ENCODE measurements at regions of chr9 and their contacts with region 1.

Region 1: DNA sequence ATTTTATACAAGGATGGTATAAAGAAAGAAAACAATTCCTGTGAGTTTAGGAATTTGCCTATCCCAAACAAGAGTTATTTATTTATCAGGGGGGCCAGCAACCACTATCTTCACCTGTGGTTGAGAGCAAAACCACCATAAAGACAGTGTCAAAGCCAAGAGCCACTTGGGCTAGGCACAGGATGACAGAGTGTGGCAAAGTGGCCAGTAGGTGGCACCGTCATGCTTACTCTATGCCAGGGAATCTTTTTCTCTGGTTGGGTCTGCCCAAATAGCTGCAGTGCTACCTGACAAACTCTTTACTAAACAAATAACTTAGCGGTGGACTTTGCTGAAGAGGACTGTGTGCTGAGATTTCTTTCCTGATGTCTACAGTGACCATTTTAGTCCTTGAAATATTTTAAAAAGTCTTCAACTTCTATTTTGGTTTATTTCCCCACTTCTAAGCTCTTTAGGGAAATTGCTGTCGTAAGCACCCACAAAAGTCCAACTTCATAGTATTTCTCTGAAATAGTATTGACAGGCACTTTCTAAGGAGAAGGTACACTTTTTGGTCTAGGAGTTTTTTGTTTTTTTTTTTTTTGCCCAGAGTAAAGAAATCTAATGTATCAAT is 285.0 kb downstream of the RFX3 start:
- DNase-seq: peak; percentile 65
- ATAC-seq: peak; percentile 99
- H3K4me3 ChIP-seq: no peak overlapping the region
- H3K27ac ChIP-seq: no peak overlapping the region
- H3K4me1 ChIP-seq: no peaks in the 10 kb centered on the region
- H3K27me3 ChIP-seq: no peaks in the 10 kb centered on the region
- CTCF ChIP-seq: peak; percentile 43 to 86 (median 81); a peak in 5 of 6 replicates
- POLR2A ChIP-seq: no peak
- RAD21 ChIP-seq: peak; percentile 64

Region 2: DNA sequence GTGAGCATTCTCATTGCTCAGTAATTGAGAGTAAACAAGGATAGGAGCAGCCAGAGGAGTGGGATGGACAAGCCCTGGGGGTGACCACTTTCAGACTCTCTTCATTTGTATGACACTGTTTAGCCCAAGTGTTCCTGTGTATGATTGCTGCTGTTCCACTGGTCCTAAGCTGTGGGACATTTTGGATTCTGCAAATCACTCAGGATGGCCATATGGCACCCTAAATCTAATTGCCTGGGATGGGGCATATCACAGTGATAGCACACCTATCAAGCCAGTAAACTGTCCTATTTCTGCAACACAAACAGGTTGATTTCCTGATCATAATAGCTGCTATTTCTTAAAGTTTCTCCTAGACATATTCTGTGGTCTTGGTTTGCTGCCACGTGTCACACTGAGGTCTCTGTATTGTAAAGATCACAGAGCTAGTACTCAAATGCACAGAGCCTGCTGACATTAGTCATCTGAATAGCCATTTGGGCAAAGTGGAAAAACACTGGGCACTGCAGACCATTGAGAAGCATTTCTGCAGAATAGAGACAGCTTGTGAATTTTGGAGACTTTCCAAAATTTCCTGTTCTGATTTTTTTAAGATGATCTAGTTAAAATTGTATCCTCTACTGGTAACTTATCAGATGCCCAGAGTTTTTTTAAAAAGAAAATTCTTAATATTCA is 35.2 kb before region 1 on chr9:
- CTCF ChIA-PET with region 1: no interaction called
- POLR2A ChIA-PET with region 1: no interaction called
- RAD21 ChIA-PET with region 1: no interaction called
- intact Hi-C with region 1: no loop called
- DNase-seq: no peak
- ATAC-seq: no peak
- H3K4me3 ChIP-seq: no peak overlapping the region
- H3K27ac ChIP-seq: no peak overlapping the region
- H3K4me1 ChIP-seq: no peaks in the 10 kb centered on the region
- H3K27me3 ChIP-seq: peaks cover 8% of the 10 kb centered on the region; the same call in 1 of the 2 replicates
- CTCF ChIP-seq: no peak
- POLR2A ChIP-seq: no peak
- RAD21 ChIP-seq: no peak

Region 3: GRCh38 chr9:3342159-3342777 is 101.5 kb after region 1 on chr9:
- CTCF ChIA-PET with region 1: no interaction called
- POLR2A ChIA-PET with region 1: no interaction called
- RAD21 ChIA-PET with region 1: no interaction called
- intact Hi-C with region 1: no loop called
- DNase-seq: no peak
- ATAC-seq: no peak
- H3K4me3 ChIP-seq: no peak overlapping the region
- H3K27ac ChIP-seq: no peak overlapping the region
- H3K4me1 ChIP-seq: peaks cover 0 to 6% of the 10 kb centered on the region in 2 experiments; a peak in 2 of 4 replicates
- H3K27me3 ChIP-seq: no peaks in the 10 kb centered on the region
- CTCF ChIP-seq: no peak
- POLR2A ChIP-seq: no peak
- RAD21 ChIP-seq: no peak

Region 4: DNA sequence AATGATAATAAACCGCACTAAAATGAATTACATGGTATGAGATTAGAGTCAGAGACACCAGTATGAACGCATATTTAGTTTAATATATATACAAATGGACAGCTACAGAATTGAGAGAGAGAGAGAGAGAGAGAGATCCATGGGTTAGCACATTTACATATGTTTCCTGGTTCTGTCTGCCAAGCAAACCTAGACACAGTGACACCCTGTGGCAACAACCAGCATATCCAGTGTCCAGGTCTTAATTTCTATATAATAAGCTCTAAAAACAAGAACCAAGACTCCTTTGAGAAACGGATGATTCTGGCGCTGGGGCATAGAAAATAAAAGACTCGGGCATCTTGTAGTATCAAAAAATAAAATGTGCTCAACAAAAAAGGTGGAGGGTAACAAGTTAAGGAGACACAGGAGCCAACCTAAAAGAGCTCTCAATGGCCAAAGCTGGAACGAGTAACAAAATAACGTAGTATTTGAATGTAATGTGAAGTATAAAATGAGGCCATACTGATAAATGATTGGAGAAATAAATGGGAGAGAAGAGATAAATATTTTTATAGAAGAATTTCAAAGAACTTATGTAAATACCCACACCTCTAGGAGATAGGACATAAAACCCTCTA is 200.5 kb after region 1 on chr9:
- CTCF ChIA-PET with region 1: interaction called, 38 read pairs
- POLR2A ChIA-PET with region 1: no interaction called
- RAD21 ChIA-PET with region 1: interaction called in 1 of 2 experiments, 6 read pairs
- intact Hi-C with region 1: loop called (anchors 2 kb)
- DNase-seq: peak; percentile 51
- ATAC-seq: peak; percentile 87
- H3K4me3 ChIP-seq: no peak overlapping the region
- H3K27ac ChIP-seq: no peak overlapping the region
- H3K4me1 ChIP-seq: no peaks in the 10 kb centered on the region
- H3K27me3 ChIP-seq: no peaks in the 10 kb centered on the region
- CTCF ChIP-seq: peak; percentile 44 to 65 (median 55); a peak in 5 of 6 replicates
- POLR2A ChIP-seq: no peak
- RAD21 ChIP-seq: peak; percentile 46; the same call in 1 of the 2 replicates

Region 5: DNA sequence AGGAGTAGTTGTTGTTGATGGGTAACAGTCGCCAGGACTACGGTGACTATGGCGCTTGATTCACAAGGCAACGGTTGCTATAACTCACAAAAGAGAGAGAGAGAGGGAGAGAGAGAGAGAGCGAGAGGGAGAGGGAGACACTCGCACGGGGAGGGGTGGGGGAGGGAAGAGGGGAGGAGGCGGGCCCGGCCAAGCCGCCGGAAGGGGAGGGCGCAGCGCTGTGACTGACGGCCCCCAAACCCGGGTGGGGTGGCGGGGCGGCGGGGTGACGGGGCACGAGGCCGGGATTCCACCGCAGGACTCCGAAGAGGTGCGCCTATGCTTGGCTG is 285.0 kb after region 1 on chr9 and contains the start of gene RFX3:
- CTCF ChIA-PET with region 1: no interaction called
- POLR2A ChIA-PET with region 1: no interaction called
- RAD21 ChIA-PET with region 1: no interaction called
- intact Hi-C with region 1: loop called (anchors 10 kb)
- DNase-seq: peak; percentile 84
- ATAC-seq: peak; percentile 78
- H3K4me3 ChIP-seq: peak within 1 kb of the TSS; percentile 89 to 90
- H3K27ac ChIP-seq: peak within 1 kb of the TSS; percentile 98
- H3K4me1 ChIP-seq: peaks cover 3 to 22% of the 10 kb centered on the region in 2 experiments; a peak in 2 of 4 replicates
- H3K27me3 ChIP-seq: no peaks in the 10 kb centered on the region
- CTCF ChIP-seq: no peak
- POLR2A ChIP-seq: no peak
- RAD21 ChIP-seq: no peak
- total RNA-seq, gene RFX3: 11.8 TPM

Measured in HCT116 (cell line).